Activated CD4-positive, alpha-beta T cell treated with anti-CD3 and anti-CD28 coated beads, Interleukin-2, amount 10 ng/mL, durations not matched to agents 24 days and 14 days (primary cell): ENCODE measurements at regions of chr7 and their contacts with region 1.

Region 1: GRCh38 chr7:108146070-108146837 is 16.1 kb upstream of the LAMB4 start:
- DNase-seq: peak; percentile 87
- H3K4me3 Mint-ChIP-seq: no peak overlapping the region
- H3K27ac Mint-ChIP-seq: no peak overlapping the region
- H3K4me1 Mint-ChIP-seq: no peaks in the 10 kb centered on the region
- H3K27me3 Mint-ChIP-seq: peaks cover 15% of the 10 kb centered on the region

Region 2: DNA sequence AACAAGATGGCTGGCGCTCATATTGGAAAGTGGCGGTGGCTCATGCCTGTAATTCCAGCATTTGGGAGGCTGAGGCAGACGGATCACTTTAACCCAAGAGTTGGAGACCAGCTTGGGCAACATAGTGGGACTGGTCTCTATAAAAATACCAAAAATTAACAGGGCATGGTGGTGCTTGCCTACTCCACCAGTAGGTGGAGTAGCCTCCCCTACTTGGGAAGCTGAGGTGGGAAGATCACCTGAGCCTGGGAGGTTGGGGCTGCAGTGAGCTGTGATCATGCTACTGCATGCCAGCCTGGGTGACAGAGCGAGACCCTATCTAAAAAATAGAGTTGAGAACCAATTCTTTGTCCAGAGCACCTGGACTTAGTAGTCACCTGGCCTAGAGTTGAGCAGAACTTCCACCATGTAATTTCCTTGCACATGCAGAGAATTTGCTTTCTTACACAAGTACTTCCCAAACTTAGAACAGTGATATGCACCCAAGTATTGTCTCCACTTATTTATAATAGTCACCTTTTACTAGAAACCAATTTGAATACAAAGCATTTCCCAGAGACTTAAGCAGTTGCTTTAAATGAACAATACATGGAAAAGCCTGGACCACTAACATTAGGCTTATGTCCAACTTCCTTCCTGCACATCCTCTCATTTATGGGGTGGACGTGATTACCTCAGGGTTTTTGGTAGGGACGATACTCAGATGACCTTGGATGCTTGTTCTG is 32.0 kb before region 1 on chr7:
- intact Hi-C with region 1: loop called (anchors 1 kb)
- DNase-seq: peak; percentile 67
- H3K4me3 Mint-ChIP-seq: no peak overlapping the region
- H3K27ac Mint-ChIP-seq: no peak overlapping the region
- H3K4me1 Mint-ChIP-seq: no peaks in the 10 kb centered on the region
- H3K27me3 Mint-ChIP-seq: peaks cover 4% of the 10 kb centered on the region